ENCODE measurements at regions of chr5 and their contacts with region 1.

Region 1: DNA sequence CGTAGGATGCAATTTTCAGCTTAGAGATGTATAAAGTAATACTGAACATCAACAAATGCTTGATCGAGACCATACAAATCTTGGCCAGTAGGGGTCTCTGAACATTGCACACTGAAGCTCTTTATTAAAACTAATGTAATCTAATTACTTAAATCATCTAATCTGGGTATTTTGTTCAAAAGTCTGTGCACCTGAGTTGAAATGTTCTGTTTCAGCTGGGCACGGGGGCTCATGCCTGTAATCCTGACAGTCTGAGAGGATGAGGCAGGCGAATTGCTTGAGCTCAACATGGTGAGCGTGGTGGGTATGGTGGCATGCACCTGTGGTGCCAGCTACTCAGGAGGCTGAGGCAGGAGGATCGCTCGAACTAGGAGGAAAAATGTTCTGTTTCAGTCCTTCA is 41.0 kb downstream of the ESM1 start:
- DNase-seq: peak; percentile 50
- H3K4me3 Mint-ChIP-seq: no peak overlapping the region
- H3K27ac Mint-ChIP-seq: no peak overlapping the region
- H3K4me1 Mint-ChIP-seq: no peaks in the 10 kb centered on the region
- H3K27me3 Mint-ChIP-seq: peaks cover 55% of the 10 kb centered on the region
- CTCF ChIP-seq: peak; percentile 69

Region 2: DNA sequence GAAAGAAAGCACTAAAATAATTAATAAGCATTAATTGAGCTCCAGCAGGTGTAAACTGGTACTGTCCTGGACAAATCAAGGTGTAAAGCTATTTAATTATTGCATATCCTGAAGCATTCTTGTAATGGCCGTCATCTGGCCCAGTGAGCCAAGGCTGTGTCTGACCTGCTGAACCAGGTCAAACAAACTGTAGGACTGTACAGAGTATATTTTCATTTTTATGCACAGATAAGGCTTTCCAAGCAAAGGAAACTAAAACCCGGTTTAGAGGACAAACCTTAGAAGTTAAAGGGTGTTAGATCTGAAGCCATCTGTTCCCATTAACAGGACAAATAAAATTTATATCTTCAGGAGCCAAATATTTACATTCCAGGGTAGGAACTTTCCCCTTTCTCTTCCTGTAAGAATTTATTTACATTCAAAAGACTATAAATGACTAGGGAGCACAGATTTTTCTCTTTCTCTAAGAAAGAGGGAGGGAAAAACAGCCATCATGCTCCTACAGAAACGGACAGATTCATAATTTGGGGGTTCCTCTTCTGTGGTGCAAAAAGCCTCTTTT is 28.8 kb before region 1 on chr5:
- CTCF ChIA-PET with region 1: interaction called, 19 read pairs
- POLR2A ChIA-PET with region 1: interaction called, 5 read pairs
- intact Hi-C with region 1: no loop called
- DNase-seq: no peak
- H3K4me3 Mint-ChIP-seq: no peak overlapping the region
- H3K27ac Mint-ChIP-seq: no peak overlapping the region
- H3K4me1 Mint-ChIP-seq: no peaks in the 10 kb centered on the region
- H3K27me3 Mint-ChIP-seq: peaks cover 86% of the 10 kb centered on the region
- CTCF ChIP-seq: no peak

Region 3: GRCh38 chr5:54959673-54960418 is 15.5 kb after region 1 on chr5:
- CTCF ChIA-PET with region 1: interaction called, 31 read pairs
- POLR2A ChIA-PET with region 1: interaction called, 3 read pairs
- intact Hi-C with region 1: no loop called
- DNase-seq: peak; percentile 50
- H3K4me3 Mint-ChIP-seq: no peak overlapping the region
- H3K27ac Mint-ChIP-seq: no peak overlapping the region
- H3K4me1 Mint-ChIP-seq: no peaks in the 10 kb centered on the region
- H3K27me3 Mint-ChIP-seq: peaks cover 70% of the 10 kb centered on the region
- CTCF ChIP-seq: peak; percentile 15

Region 4: GRCh38 chr5:55134053-55134722 is 189.8 kb after region 1 on chr5:
- CTCF ChIA-PET with region 1: interaction called, 35 read pairs
- POLR2A ChIA-PET with region 1: no interaction called
- intact Hi-C with region 1: no loop called
- DNase-seq: no peak
- H3K4me3 Mint-ChIP-seq: no peak overlapping the region
- H3K27ac Mint-ChIP-seq: no peak overlapping the region
- H3K4me1 Mint-ChIP-seq: no peaks in the 10 kb centered on the region
- H3K27me3 Mint-ChIP-seq: peaks cover 81% of the 10 kb centered on the region
- CTCF ChIP-seq: no peak

Region 5: GRCh38 chr5:55151923-55152842 is 207.8 kb after region 1 on chr5:
- CTCF ChIA-PET with region 1: interaction called, 26 read pairs
- POLR2A ChIA-PET with region 1: no interaction called
- intact Hi-C with region 1: no loop called
- DNase-seq: peak; percentile 66
- H3K4me3 Mint-ChIP-seq: no peak overlapping the region
- H3K27ac Mint-ChIP-seq: no peak overlapping the region
- H3K4me1 Mint-ChIP-seq: peaks cover 6% of the 10 kb centered on the region
- H3K27me3 Mint-ChIP-seq: peaks cover 39% of the 10 kb centered on the region
- CTCF ChIP-seq: no peak